ENCODE measurements at regions of chr12 and their contacts with region 1.

Region 1: GRCh38 chr12:81942594-81942993 is 183.4 kb upstream of the PPFIA2 start:
- DNase-seq: peak; percentile 74 to 89 (median 85)
- H3K4me3 ChIP-seq: peak overlapping the region in 1 of 3 experiments; percentile 46
- H3K4me3 Mint-ChIP-seq: peak overlapping the region in 1 of 2 donors; percentile 81
- H3K27ac ChIP-seq: no peak overlapping the region
- H3K27ac Mint-ChIP-seq: peak overlapping the region in 5 of 7 donors; percentile 4 to 82 (median 52)
- H3K4me1 ChIP-seq: peaks cover 34 to 54% of the 10 kb centered on the region in 2 donors
- H3K4me1 Mint-ChIP-seq: peaks cover 59% of the 10 kb centered on the region
- H3K27me3 ChIP-seq: peaks cover 49 to 72% of the 10 kb centered on the region in 2 donors
- H3K27me3 Mint-ChIP-seq: peaks cover 64 to 81% (median 71%) of the 10 kb centered on the region in 3 donors
- CTCF ChIP-seq: no peak

Region 2: GRCh38 chr12:81597928-81598604 is 344.5 kb before region 1 on chr12:
- intact Hi-C with region 1: no loop called
- DNase-seq: no peak
- H3K4me3 ChIP-seq: no peak overlapping the region
- H3K4me3 Mint-ChIP-seq: no peak overlapping the region
- H3K27ac ChIP-seq: no peak overlapping the region
- H3K27ac Mint-ChIP-seq: no peak overlapping the region
- H3K4me1 ChIP-seq: no peaks in the 10 kb centered on the region
- H3K4me1 Mint-ChIP-seq: no peaks in the 10 kb centered on the region
- H3K27me3 ChIP-seq: no peaks in the 10 kb centered on the region
- H3K27me3 Mint-ChIP-seq: no peaks in the 10 kb centered on the region
- CTCF ChIP-seq: no peak

Region 3: DNA sequence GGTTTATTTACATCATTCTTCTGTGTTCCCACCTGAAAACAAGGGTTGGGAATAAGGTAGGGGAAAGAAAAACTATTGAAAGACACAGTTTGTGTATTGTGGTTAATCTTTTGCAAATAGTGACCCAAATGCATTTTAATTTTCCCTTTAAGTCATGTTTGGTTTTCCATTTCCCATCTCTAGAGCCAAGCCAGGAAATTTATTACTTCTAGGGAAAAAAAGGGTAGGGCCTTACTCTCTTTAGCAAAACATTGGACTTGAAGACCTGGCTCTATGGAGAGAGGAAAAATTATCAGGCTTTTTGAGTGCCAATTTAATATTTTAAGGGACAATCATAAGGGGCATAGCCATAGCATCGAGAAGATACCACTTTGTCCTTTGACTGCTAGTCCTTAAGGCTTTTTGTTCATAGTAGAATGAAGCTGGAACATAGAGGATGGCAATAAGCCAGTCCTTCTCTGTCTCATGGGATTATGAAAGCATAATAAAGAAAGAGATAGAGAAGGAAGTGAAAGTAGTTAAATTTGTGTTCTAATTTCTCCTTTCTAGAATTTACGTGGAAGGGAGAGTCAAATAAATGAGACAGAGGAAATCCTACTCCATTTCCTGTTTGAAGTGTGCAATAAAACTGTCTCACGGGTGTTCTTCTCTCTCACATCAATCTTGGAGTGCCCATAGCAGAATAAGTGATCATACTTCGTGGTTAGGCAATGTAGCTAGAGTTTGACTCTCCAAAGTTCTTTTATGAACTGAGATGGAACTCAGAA is 132.6 kb before region 1 on chr12:
- intact Hi-C with region 1: loop called in 1 of 2 experiments (anchors 10 kb)
- DNase-seq: peak; percentile 52 to 82 (median 55)
- H3K4me3 ChIP-seq: peak overlapping the region in 1 of 3 experiments; percentile 17
- H3K4me3 Mint-ChIP-seq: peak overlapping the region in 1 of 2 donors; percentile 53
- H3K27ac ChIP-seq: peak overlapping the region in 1 of 2 donors; percentile 20
- H3K27ac Mint-ChIP-seq: peak overlapping the region in 5 of 7 donors; percentile 17 to 88 (median 85)
- H3K4me1 ChIP-seq: peaks cover 21 to 25% of the 10 kb centered on the region in 2 donors
- H3K4me1 Mint-ChIP-seq: peaks cover 14% of the 10 kb centered on the region
- H3K27me3 ChIP-seq: peaks cover 53 to 77% of the 10 kb centered on the region in 2 donors
- H3K27me3 Mint-ChIP-seq: peaks cover 32 to 74% (median 67%) of the 10 kb centered on the region in 3 donors
- CTCF ChIP-seq: no peak

Region 4: DNA sequence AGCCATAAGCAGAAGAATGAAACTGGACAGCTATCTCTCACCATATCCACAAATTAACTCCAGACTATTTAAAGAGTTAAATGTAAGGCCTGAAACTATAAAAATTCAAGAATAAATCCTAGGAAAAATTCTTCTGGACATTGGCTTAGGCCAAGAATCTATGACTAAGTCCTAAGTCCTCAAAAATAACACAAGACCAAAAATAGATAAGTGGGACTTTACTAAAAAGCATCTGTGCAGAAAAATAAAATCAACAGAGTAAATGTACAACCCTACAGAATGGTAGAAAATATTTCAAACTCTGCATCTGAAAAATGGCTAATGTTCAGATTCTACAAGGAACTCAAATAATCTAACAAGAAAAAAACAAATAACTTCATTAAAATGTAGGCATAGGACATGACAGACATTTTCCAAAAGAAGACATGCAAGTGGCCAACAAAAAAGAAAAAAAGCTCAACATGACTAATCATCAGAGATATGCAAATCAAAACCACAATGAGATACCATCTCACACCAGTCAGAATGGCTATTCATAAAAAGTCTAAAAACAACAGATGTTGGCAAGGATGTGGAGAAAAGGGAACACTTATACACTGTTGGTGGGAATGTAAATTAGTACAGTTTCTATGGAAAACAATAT is 122.5 kb before region 1 on chr12:
- intact Hi-C with region 1: no loop called
- DNase-seq: no peak
- H3K4me3 ChIP-seq: no peak overlapping the region
- H3K4me3 Mint-ChIP-seq: no peak overlapping the region
- H3K27ac ChIP-seq: no peak overlapping the region
- H3K27ac Mint-ChIP-seq: no peak overlapping the region
- H3K4me1 ChIP-seq: no peaks in the 10 kb centered on the region
- H3K4me1 Mint-ChIP-seq: no peaks in the 10 kb centered on the region
- H3K27me3 ChIP-seq: peaks cover 0 to 17% of the 10 kb centered on the region in 2 donors
- H3K27me3 Mint-ChIP-seq: peaks cover 5 to 30% (median 25%) of the 10 kb centered on the region in 3 donors
- CTCF ChIP-seq: no peak

Region 5: DNA sequence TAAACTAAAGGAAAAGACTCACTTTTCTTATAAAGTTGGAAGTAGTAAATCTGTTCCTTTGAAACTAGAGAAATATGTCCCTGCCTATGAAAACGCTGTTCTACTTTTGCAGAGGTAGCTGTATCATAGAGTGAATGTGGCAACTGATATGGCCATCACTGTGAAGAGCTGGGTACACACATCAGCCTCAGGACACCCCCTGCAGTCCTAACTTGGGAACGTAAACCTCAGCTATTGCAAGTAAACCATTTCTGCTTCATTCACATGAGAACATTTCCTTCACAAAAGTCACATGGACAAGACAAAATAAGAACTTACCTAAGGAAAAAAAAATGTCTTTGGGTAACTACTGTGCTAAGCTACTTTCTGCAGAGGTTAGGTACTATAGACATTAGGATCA is 49.9 kb after region 1 on chr12:
- intact Hi-C with region 1: no loop called
- DNase-seq: peak; percentile 29 to 66 (median 31)
- H3K4me3 ChIP-seq: no peak overlapping the region
- H3K4me3 Mint-ChIP-seq: peak overlapping the region in 1 of 2 donors; percentile 14
- H3K27ac ChIP-seq: no peak overlapping the region
- H3K27ac Mint-ChIP-seq: no peak overlapping the region
- H3K4me1 ChIP-seq: no peaks in the 10 kb centered on the region
- H3K4me1 Mint-ChIP-seq: no peaks in the 10 kb centered on the region
- H3K27me3 ChIP-seq: peaks cover 0 to 2% of the 10 kb centered on the region in 2 donors
- H3K27me3 Mint-ChIP-seq: peaks cover 1 to 6% (median 6%) of the 10 kb centered on the region in 3 donors
- CTCF ChIP-seq: peak; percentile 49

Region 6: DNA sequence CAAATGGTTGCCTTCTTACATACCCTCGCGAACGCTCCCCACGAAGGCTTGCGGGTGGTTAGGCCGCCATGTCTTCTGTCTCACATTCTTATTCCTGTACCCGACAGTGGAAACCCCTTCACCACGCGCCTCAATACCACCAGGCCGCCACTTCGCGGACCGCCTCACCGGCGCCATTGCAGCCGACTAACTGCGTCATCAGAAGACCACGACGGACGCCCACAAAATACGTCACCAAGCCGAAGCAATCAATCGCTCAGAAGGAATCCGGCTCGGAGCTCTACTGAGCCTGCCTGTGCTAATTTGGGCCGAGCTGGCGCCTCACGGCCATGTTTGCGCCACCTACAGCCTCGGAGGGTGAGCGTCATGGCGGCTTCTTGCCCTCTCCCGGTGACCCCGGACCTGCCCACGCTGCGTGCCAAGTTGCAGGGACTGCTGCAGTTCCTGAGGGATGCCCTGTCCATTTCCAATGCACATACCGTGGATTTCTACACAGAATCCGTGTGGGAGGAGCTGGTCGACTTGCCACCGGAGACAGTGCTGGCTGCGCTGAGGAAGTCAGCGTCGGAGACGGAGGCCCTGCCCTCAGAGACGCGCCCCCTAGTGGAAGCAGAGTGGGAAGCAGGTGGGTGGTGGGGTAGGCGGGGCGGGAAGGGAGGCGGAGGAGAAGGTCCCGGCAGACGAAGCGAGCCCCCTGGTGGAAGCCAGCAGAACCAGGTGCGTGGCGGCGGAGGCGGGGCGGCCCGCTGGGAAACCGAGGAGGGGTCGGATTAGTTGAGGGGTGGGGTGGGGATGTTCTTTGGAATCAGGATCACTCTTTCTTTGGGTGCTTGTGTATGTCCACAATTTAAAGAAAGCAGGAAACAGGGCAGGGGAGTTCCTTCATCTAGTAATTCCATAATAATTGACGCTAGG is 415.9 kb after region 1 on chr12 and contains the starts of genes CCDC59 and METTL25:
- intact Hi-C with region 1: loop called in 1 of 2 experiments (anchors 10 kb)
- DNase-seq: peak; percentile 97 to 99 (median 99)
- H3K4me3 ChIP-seq: peak within 1 kb of the TSS; percentile 83 to 100 (median 97)
- H3K4me3 Mint-ChIP-seq: peak within 1 kb of the TSS; percentile 97 to 100
- H3K27ac ChIP-seq: peak within 1 kb of the TSS; percentile 85 to 97
- H3K27ac Mint-ChIP-seq: peak within 1 kb of the TSS; percentile 97 to 100 (median 100)
- H3K4me1 ChIP-seq: peaks cover 16 to 28% of the 10 kb centered on the region in 2 donors
- H3K4me1 Mint-ChIP-seq: peaks cover 21% of the 10 kb centered on the region
- H3K27me3 ChIP-seq: no peaks in the 10 kb centered on the region
- H3K27me3 Mint-ChIP-seq: peaks cover 0 to 4% (median 0%) of the 10 kb centered on the region in 3 donors
- CTCF ChIP-seq: peak; percentile 97
- polyA plus RNA-seq, gene CCDC59: 53.5 to 70.9 (median 55.3) TPM
- polyA plus RNA-seq, gene METTL25: 7.0 to 12.2 (median 8.1) TPM